CD8-positive, alpha-beta T cell (primary cell): ENCODE measurements at regions of chr14 and their contacts with region 1.

Region 1: GRCh38 chr14:99729991-99730868 is 46.1 kb downstream of the CYP46A1 start:
- DNase-seq: peak; percentile 39 to 77 (median 66)
- ATAC-seq: peak; percentile 93
- H3K4me3 ChIP-seq: no peak overlapping the region
- H3K4me3 Mint-ChIP-seq: peak overlapping the region; percentile 57
- H3K27ac ChIP-seq: no peak overlapping the region
- H3K27ac Mint-ChIP-seq: no peak overlapping the region
- H3K4me1 ChIP-seq: no peaks in the 10 kb centered on the region
- H3K4me1 Mint-ChIP-seq: no peaks in the 10 kb centered on the region
- H3K27me3 ChIP-seq: peaks cover 0 to 15% of the 10 kb centered on the region in 2 experiments
- H3K27me3 Mint-ChIP-seq: peaks cover 37% of the 10 kb centered on the region
- CTCF ChIP-seq: peak; percentile 70

Region 2: GRCh38 chr14:99287269-99287942 is 442.8 kb before region 1 on chr14:
- CTCF ChIA-PET with region 1: no interaction called
- POLR2A ChIA-PET with region 1: no interaction called
- intact Hi-C with region 1: no loop called
- DNase-seq: peak in 6 of 9 experiments; percentile 36 to 81 (median 58)
- ATAC-seq: peak; percentile 81
- H3K4me3 ChIP-seq: peak overlapping the region in 1 of 2 experiments; percentile 41
- H3K4me3 Mint-ChIP-seq: peak overlapping the region; percentile 80
- H3K27ac ChIP-seq: peak overlapping the region; percentile 22 to 81
- H3K27ac Mint-ChIP-seq: peak overlapping the region; percentile 85
- H3K4me1 ChIP-seq: no peaks in the 10 kb centered on the region
- H3K4me1 Mint-ChIP-seq: peaks cover 15% of the 10 kb centered on the region
- H3K27me3 ChIP-seq: no peaks in the 10 kb centered on the region
- H3K27me3 Mint-ChIP-seq: no peaks in the 10 kb centered on the region
- CTCF ChIP-seq: no peak

Region 3: GRCh38 chr14:99752486-99753121 is 22.4 kb after region 1 on chr14:
- CTCF ChIA-PET with region 1: interaction called, 11 read pairs
- POLR2A ChIA-PET with region 1: no interaction called
- intact Hi-C with region 1: no loop called
- DNase-seq: no peak
- ATAC-seq: no peak
- H3K4me3 ChIP-seq: no peak overlapping the region
- H3K4me3 Mint-ChIP-seq: no peak overlapping the region
- H3K27ac ChIP-seq: no peak overlapping the region
- H3K27ac Mint-ChIP-seq: no peak overlapping the region
- H3K4me1 ChIP-seq: peaks cover 13% of the 10 kb centered on the region
- H3K4me1 Mint-ChIP-seq: peaks cover 15% of the 10 kb centered on the region
- H3K27me3 ChIP-seq: peaks cover 5 to 16% of the 10 kb centered on the region in 2 experiments
- H3K27me3 Mint-ChIP-seq: peaks cover 37% of the 10 kb centered on the region
- CTCF ChIP-seq: no peak

Region 4: GRCh38 chr14:99884834-99885648 is 154.8 kb after region 1 on chr14:
- CTCF ChIA-PET with region 1: interaction called, 29 read pairs
- POLR2A ChIA-PET with region 1: no interaction called
- intact Hi-C with region 1: loop called in 1 of 2 experiments (anchors 1 kb)
- DNase-seq: peak in 4 of 9 experiments; percentile 11 to 74 (median 40)
- ATAC-seq: peak; percentile 51
- H3K4me3 ChIP-seq: no peak overlapping the region
- H3K4me3 Mint-ChIP-seq: no peak overlapping the region
- H3K27ac ChIP-seq: no peak overlapping the region
- H3K27ac Mint-ChIP-seq: no peak overlapping the region
- H3K4me1 ChIP-seq: no peaks in the 10 kb centered on the region
- H3K4me1 Mint-ChIP-seq: no peaks in the 10 kb centered on the region
- H3K27me3 ChIP-seq: peaks cover 0 to 3% of the 10 kb centered on the region in 2 experiments
- H3K27me3 Mint-ChIP-seq: peaks cover 8% of the 10 kb centered on the region
- CTCF ChIP-seq: peak; percentile 93